ENCODE measurements at regions of chr3 and their contacts with region 1.

Region 1: GRCh38 chr3:157088601-157089454 is 71.1 kb downstream of the CCNL1 start:
- DNase-seq: peak; percentile 94
- ATAC-seq: peak; percentile 91
- H3K4me3 Mint-ChIP-seq: peak overlapping the region; percentile 64
- H3K27ac Mint-ChIP-seq: peak overlapping the region; percentile 92
- H3K4me1 Mint-ChIP-seq: peaks cover 43% of the 10 kb centered on the region
- H3K27me3 Mint-ChIP-seq: peaks cover 14% of the 10 kb centered on the region
- CTCF ChIP-seq: no peak

Region 2: GRCh38 chr3:157104928-157105652 is 16.3 kb after region 1 on chr3:
- CTCF ChIA-PET with region 1: interaction called, 21 read pairs
- POLR2A ChIA-PET with region 1: interaction called, 6 read pairs
- DNase-seq: peak; percentile 67
- ATAC-seq: peak; percentile 88
- H3K4me3 Mint-ChIP-seq: no peak overlapping the region
- H3K27ac Mint-ChIP-seq: no peak overlapping the region
- H3K4me1 Mint-ChIP-seq: peaks cover 32% of the 10 kb centered on the region
- H3K27me3 Mint-ChIP-seq: no peaks in the 10 kb centered on the region
- CTCF ChIP-seq: no peak

Region 3: GRCh38 chr3:157136647-157137387 is 48.0 kb after region 1 on chr3:
- CTCF ChIA-PET with region 1: interaction called, 14 read pairs
- POLR2A ChIA-PET with region 1: interaction called, 4 read pairs
- DNase-seq: no peak
- ATAC-seq: no peak
- H3K4me3 Mint-ChIP-seq: no peak overlapping the region
- H3K27ac Mint-ChIP-seq: no peak overlapping the region
- H3K4me1 Mint-ChIP-seq: peaks cover 5% of the 10 kb centered on the region; the same call in 1 of the 2 replicates
- H3K27me3 Mint-ChIP-seq: no peaks in the 10 kb centered on the region; the same call in 1 of the 2 replicates
- CTCF ChIP-seq: no peak